ENCODE measurements at regions of chr15 and their contacts with region 1.

Region 1: DNA sequence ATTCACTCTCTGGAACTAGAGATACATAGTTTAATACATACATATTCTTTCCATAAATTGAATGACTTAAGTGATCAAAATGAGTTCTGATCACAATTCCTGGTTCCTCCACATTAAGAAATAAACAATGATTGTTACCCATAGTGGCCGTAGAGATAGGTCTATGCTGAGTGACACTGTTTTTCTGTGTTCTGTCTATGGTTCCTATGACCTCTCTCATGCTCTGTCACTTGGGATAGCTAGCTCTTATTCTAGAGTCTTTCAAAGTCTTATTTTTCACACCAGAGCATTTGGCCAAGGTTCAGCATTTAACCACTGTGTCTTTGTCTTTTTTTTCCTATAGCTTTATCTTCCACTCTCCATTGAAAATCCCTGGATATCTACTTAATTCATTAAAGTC is 132.4 kb downstream of the GOLGA6L6 start:
- DNase-seq: no peak
- H3K4me3 ChIP-seq: no peak overlapping the region
- H3K4me3 Mint-ChIP-seq: no peak overlapping the region
- H3K27ac ChIP-seq: no peak overlapping the region
- H3K27ac Mint-ChIP-seq: no peak overlapping the region
- H3K4me1 ChIP-seq: no peaks in the 10 kb centered on the region
- H3K4me1 Mint-ChIP-seq: no peaks in the 10 kb centered on the region
- H3K27me3 ChIP-seq: no peaks in the 10 kb centered on the region
- H3K27me3 Mint-ChIP-seq: no peaks in the 10 kb centered on the region
- CTCF ChIP-seq: no peak

Region 2: DNA sequence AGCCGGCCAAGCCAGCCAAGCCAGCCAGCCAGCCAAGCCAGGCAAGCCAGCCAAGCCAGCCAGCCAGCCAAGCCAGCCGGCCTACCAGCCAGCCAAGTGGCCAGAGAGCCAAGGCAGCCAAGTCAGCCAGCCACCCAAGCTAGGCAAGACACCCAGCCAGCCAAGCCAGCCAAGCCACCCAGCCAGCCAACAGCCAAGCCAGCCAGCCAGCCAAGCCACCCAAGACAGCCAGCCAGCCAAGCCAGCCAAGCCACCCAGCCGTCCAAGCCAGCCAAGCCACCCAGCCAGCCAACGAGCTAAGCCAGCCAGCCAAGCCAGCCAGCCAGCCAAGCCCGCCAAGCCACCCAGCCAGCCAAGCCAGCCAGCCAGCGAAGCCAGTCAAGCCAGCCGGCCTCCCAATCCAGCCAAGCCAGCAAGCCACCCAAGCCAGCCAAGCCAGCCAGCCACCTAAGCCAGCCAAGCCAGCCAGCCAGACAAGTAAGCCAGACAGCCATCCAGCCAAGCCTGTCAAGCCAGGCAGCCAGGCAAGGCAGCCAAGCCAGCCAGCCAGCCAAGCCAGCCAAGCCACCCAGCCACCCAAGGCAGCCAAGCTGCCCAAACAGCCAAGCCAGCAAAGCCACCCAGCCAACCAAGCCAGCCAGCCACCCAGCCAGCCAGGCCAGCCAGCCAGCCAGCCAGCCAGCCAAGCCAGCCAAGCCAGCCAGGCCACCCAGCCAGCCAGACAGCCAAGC is 68.2 kb before region 1 on chr15:
- intact Hi-C with region 1: loop called in 1 of 2 experiments (anchors 10 kb)
- DNase-seq: peak; percentile 21 to 36 (median 32)
- H3K4me3 ChIP-seq: peak overlapping the region in 1 of 3 experiments; percentile 18
- H3K4me3 Mint-ChIP-seq: no peak overlapping the region
- H3K27ac ChIP-seq: no peak overlapping the region
- H3K27ac Mint-ChIP-seq: no peak overlapping the region
- H3K4me1 ChIP-seq: no peaks in the 10 kb centered on the region
- H3K4me1 Mint-ChIP-seq: no peaks in the 10 kb centered on the region
- H3K27me3 ChIP-seq: no peaks in the 10 kb centered on the region
- H3K27me3 Mint-ChIP-seq: no peaks in the 10 kb centered on the region
- CTCF ChIP-seq: no peak

Region 3: DNA sequence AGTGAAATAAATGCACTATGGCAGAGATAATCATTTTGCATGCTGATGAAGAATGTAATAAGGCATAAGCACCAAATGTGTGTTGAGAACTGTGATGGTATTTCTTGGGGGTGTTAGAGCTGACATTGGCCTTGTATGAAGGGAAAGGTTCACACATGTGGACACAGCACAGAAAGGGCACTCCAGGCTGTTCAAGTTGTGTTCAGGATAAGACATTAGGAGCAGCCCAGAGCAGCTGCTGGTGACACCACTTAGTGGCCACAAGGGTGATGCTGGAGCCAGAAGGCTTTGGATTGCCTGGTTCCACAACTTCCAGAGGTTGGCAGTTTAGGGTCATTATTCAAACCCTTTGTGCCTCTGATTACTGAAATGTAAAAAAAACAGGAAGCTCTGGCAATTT is 23.0 kb before region 1 on chr15:
- intact Hi-C with region 1: loop called in 1 of 2 experiments (anchors 2 kb)
- DNase-seq: no peak
- H3K4me3 ChIP-seq: no peak overlapping the region
- H3K4me3 Mint-ChIP-seq: no peak overlapping the region
- H3K27ac ChIP-seq: no peak overlapping the region
- H3K27ac Mint-ChIP-seq: no peak overlapping the region
- H3K4me1 ChIP-seq: no peaks in the 10 kb centered on the region
- H3K4me1 Mint-ChIP-seq: no peaks in the 10 kb centered on the region
- H3K27me3 ChIP-seq: no peaks in the 10 kb centered on the region
- H3K27me3 Mint-ChIP-seq: no peaks in the 10 kb centered on the region
- CTCF ChIP-seq: no peak

Measured in CD14-positive monocyte (primary cell).